Head of caudate nucleus (tissue), 42 donors: ENCODE measurements at regions of chr15 and their contacts with region 1.

Region 1: DNA sequence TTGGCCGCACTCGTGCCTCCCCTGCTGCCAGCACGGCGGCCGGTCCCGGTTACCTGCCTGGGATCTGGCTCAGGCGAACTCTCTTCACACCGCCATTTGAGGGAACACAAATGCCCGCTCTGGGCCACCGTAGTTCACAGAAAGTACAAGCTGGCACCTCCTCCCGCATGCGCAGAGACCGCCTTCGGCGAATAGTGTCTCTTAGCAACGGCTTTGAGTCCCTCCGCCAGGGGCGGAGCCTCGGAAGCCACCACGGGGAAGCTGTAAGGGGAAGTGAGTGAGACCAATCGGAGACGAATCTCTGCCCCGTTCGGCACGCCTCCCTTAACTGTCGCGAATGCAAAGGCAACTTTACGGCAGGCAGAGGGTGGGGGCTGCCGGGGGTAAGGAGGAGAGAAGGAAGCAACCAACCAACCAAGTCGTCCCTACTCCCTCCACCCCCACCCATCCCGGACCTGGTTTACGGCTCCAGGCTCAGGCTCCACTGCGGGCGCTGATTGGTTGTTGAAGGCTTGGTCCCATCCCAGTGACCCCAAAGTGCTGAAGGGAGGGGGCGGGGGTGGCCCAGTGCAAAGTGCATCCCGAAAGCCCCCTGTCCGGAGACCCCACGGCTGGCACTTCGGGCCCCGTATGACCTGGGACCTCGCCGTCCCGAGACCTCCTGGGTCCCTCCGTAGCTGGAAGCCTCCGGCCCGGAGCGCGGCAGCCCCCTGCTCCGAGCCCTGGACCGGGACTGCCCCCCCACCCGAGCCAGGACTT is at the starts of genes ASB7 and LINS1:
- DNase-seq: peak; percentile 99 to 100 (median 100)

Region 2: DNA sequence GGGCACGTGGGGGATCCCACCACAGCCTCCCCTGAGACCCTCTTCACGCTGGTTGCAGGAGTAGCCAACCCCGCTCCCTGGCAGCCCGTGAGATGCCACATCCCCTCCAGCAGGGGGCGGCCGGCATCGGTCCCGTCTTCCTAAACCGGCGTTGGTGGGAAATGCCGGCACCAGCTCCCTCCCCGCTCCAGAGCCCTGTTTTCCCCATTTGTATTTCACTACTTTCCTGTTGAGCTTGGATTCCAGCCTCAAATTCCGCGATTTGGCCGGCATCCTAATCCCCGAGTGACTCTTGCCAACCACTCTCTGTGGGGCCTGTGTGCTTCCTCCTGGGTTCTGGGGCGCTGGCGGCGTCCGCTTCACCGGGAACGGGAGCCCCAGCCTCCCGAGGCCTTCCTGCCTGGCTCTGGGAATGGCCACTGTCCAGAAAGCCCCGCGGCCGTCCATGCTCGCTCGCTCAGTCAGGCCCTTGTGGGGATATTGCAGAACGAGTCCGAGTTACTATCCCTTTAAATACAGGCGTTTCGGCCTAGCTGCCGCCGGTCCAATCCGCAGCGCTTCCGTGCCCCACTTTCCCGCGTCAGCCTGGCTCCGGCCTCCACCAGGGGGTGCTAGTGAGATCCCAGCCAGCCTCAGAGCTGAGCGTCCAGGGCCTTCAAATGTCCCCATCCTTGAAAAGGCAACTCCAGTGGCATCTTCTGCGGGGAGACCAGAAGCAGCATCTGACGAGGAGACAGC is 252.4 kb before region 1 on chr15:
- intact Hi-C with region 1: loop called (anchors 10 kb)
- DNase-seq: peak; percentile 86 to 97 (median 93)

Region 3: GRCh38 chr15:100553468-100553867 is 48.8 kb before region 1 on chr15:
- intact Hi-C with region 1: no loop called
- DNase-seq: no peak

Region 4: DNA sequence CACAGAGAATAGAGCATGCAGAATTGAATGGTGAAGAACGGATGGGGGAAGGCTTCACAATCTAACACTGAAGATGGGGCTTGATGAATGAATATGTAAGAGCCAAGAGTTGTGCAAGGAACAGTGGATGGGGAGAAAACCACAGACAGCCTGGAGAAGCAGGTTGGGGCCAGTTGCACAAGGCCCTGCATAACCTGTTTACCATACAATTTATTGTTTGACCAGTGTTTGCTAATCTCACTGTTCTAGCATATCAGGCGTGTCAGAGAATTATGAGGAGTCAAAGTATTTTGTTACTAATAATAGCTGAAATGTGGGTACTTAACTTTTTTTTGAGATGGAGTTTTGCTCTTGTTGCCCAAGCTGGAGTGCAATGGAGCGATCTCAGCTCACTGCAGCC is 36.7 kb before region 1 on chr15:
- intact Hi-C with region 1: no loop called
- DNase-seq: no peak

Region 5: DNA sequence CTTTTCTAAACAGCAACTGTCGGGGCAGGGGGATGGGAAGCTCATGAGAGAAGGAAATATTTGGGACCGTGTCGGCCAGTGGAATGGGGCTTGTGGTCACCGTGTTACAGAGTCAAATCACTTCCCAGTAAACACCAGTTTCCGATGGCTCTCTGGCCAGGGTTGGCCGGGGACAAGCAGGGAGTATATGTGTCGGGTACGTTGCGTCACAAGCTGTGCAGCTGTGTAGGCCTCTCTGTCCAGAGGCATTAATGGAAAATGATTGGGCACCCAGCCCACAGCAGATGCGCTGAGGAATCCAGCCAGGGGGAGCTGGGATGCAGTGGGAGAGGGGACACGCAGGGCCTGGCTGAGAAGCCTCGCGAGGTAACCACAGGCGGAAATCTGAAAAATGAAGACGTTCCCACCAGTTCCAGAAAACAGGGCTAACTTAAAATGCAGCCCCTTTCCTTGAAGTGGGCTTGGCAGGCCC is 261.6 kb after region 1 on chr15:
- intact Hi-C with region 1: loop called (anchors 5 kb)
- DNase-seq: peak; percentile 49 to 94 (median 82)

Region 6: DNA sequence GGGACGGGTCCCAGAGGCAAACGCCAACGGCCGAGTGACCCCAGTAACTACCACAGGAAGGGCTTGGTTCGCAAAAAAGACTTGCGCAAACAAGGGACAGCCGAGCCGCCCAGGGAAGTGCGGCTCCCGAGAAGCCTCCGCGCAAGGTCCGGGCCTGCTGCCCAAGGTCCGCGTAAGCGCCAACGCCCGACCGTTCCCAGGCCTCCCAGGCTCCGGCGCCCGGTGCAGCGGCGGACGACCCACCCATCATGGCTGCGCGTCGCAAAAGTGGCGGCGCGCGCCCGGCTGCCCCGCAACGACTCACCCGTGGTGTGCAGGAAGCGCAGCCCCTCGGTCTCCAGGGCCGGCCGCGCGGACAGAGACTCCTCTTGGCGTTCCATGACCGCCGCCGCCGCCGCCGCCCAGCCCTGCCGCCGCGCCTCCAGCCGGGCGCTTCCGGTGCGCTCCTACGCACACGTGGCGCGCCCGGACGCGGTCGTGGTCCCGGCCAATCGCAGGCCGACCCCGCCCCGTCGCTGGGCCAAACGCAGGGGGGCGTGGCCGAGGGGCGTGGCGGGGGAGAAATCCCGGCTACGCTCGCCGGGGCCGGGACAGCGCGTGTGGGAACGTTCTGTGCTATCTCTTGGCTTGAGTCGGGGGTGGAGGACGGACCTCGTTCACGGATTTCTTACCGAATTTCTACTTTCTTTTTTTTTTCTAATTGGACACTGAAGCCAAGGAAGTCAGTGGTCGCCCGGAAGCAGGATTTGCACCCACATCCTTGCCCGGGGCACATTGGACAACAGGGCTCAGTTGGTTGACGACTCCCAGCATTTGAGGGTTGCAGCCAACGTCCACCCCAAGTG is 675.0 kb after region 1 on chr15 and contains the start of gene SELENOS:
- intact Hi-C with region 1: loop called (anchors 10 kb)
- DNase-seq: peak; percentile 60 to 95 (median 90)